Heart left ventricle (tissue), 16 donors: ENCODE measurements at regions of chr13 and their contacts with region 1.

Region 1: GRCh38 chr13:99656092-99656745 is 154.9 kb downstream of the TM9SF2 start:
- DNase-seq: peak; percentile 61 to 75 (median 71)
- ATAC-seq: peak in 3 of 4 donors; percentile 68 to 75 (median 68)
- H3K4me3 ChIP-seq: peak overlapping the region in 1 of 12 donors; percentile 2
- H3K27ac ChIP-seq: no peak overlapping the region
- H3K4me1 ChIP-seq: peaks cover 0 to 33% (median 9%) of the 10 kb centered on the region in 12 donors
- H3K27me3 ChIP-seq: peaks cover 0 to 15% (median 0%) of the 10 kb centered on the region in 9 donors
- CTCF ChIP-seq: peak; percentile 80 to 95 (median 88)
- POLR2A ChIP-seq: no peak

Region 2: GRCh38 chr13:99895223-99895994 is 239.2 kb after region 1 on chr13:
- intact Hi-C with region 1: loop called in 1 of 10 experiments (anchors 10 kb)
- DNase-seq: no peak
- ATAC-seq: no peak
- H3K4me3 ChIP-seq: peak overlapping the region; percentile 7 to 56 (median 38)
- H3K27ac ChIP-seq: no peak overlapping the region
- H3K4me1 ChIP-seq: peaks cover 0 to 18% (median 8%) of the 10 kb centered on the region in 12 donors
- H3K27me3 ChIP-seq: peaks cover 16 to 74% (median 49%) of the 10 kb centered on the region in 9 donors
- CTCF ChIP-seq: no peak
- POLR2A ChIP-seq: no peak

Region 3: DNA sequence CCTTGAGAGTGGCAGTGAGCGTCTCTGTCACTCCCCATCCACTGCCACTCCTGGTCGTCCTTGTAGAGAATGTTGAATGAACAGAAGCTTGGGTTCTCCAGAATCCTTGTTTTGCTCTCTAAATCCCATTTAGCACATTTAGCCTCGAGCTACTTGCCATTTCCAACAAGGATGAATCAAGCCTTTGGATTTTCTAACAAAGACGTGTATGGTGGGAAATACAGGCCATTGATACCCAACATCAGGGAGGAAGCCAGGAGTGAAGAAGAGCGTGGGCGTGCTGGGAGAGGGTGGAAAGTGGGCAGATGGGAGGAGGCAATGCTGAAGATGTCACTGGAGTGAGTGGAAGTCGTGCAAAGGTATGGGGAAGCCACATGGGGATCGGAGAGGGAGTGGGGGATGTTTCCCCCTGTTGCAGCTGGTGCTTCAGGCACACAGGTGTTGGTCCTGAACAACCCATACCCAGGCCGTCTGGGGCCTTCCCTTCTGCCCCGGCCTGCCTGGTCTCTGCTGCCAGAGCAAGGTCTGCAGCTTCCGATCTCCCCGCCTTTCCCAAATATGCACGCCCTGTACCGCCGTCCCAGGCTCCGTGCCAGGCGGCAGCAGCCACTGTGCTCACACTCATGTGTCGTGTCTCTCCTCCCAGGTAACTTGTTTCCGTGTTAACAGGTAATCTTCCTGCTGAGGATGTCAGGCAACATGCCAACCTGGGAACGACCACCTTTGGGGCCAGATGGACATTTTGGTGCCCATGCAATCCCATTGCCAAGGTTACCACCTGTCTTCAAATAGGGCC is 266.6 kb after region 1 on chr13:
- intact Hi-C with region 1: loop called in 8 of 10 experiments (anchors 5 to 10 kb)
- DNase-seq: no peak
- ATAC-seq: no peak
- H3K4me3 ChIP-seq: no peak overlapping the region
- H3K27ac ChIP-seq: no peak overlapping the region
- H3K4me1 ChIP-seq: no peaks in the 10 kb centered on the region
- H3K27me3 ChIP-seq: peaks cover 0 to 63% (median 2%) of the 10 kb centered on the region in 9 donors
- CTCF ChIP-seq: no peak
- POLR2A ChIP-seq: no peak

Region 4: DNA sequence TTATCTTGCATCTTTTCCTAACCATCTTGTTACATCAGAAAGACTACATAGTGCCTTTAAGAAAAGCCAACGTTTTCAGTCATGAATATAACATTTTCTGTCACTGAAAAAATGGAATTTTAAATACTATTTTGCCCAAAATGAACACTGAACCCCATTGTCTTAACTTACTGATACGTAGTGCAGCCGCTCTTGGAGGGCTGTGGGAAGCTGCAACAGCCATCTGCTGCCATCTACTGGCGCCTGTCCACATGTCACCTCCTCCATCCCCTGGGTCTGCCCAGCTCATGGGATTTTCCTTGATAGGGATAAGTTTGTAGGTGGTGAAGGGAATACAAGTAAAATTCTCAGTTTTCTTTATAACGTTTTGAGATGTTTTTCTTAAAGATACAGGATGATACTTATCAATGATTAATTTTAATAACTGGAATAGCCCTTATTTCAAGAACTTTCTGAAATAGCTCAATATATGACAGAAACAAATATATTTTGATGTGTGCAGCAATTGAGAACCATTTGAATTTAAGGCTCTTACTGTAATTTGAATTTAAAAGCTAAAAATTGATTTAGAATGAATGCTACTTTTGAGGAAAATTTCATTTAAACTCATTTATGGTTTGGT is 858.7 kb after region 1 on chr13:
- intact Hi-C with region 1: loop called (anchors 1 to 5 kb)
- DNase-seq: peak; percentile 71 to 85 (median 76)
- ATAC-seq: peak; percentile 91 to 94 (median 92)
- H3K4me3 ChIP-seq: no peak overlapping the region
- H3K27ac ChIP-seq: no peak overlapping the region
- H3K4me1 ChIP-seq: peaks cover 0 to 20% (median 5%) of the 10 kb centered on the region in 12 donors
- H3K27me3 ChIP-seq: no peaks in the 10 kb centered on the region
- CTCF ChIP-seq: peak; percentile 83 to 96 (median 93)
- POLR2A ChIP-seq: no peak

Region 5: DNA sequence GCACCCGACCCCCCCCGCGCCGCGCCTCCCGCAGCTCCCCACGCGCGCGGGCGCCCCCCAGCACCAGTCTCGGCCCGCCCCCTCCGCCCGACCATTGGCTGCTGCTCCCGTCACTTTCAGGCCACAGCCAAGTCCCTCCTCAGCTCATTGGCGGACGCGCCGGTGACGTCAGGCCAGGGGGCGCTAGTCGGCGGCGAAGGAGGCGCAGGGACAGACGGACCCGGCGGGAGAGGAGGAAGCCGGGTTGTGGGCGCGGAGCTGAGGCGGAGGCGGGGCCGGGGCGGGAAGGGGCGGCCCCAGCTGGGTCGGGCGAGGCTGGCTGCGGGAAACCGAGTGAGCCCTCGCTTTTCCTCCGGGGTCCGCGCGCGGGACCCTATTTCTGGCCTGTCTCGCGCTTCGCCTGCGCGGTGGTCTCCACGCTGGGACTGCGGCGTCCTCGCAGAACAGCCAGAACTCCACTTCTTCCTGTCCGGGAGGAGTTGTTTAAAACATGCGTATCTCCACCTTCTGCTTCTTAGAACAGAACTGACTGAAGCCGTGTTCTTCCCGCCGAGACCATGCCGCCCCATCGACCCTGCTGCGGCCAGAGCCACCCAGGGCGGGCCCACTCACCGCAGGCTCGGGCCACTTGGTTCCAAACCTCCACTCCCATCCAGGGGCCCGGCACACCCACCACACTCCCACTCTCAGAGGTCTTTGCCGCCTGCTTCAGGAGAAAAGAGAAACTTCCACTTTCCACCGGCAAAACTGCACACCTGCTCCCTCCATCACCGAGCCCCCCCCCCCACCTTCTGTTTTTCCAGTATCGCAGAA is 1018.8 kb after region 1 on chr13:
- intact Hi-C with region 1: loop called in 1 of 10 experiments (anchors 10 kb)
- DNase-seq: peak; percentile 99 to 100 (median 100)
- ATAC-seq: peak; percentile 98 to 99 (median 98)
- H3K4me3 ChIP-seq: peak overlapping the region; percentile 43 to 96 (median 78)
- H3K27ac ChIP-seq: peak overlapping the region; percentile 65 to 92 (median 86)
- H3K4me1 ChIP-seq: peaks cover 0 to 20% (median 12%) of the 10 kb centered on the region in 12 donors
- H3K27me3 ChIP-seq: no peaks in the 10 kb centered on the region
- CTCF ChIP-seq: peak in 10 of 12 donors; percentile 31 to 61 (median 42)
- POLR2A ChIP-seq: peak in 1 of 2 donors; percentile 85

Region 6: GRCh38 chr13:101127741-101128353 is 1471.6 kb after region 1 on chr13:
- intact Hi-C with region 1: loop called in 1 of 10 experiments (anchors 10 kb)
- DNase-seq: no peak
- ATAC-seq: peak in 2 of 4 donors; percentile 47 to 52
- H3K4me3 ChIP-seq: no peak overlapping the region
- H3K27ac ChIP-seq: no peak overlapping the region
- H3K4me1 ChIP-seq: no peaks in the 10 kb centered on the region
- H3K27me3 ChIP-seq: no peaks in the 10 kb centered on the region
- CTCF ChIP-seq: peak; percentile 45 to 77 (median 67)
- POLR2A ChIP-seq: no peak